ENCODE measurements at regions of chr22 and their contacts with region 1.

Region 1: GRCh38 chr22:46457524-46458488 is 79.6 kb downstream of the CELSR1 start:
- DNase-seq: no peak
- H3K4me3 ChIP-seq: no peak overlapping the region
- CTCF ChIP-seq: no peak

Region 2: GRCh38 chr22:46390652-46391301 is 67.0 kb before region 1 on chr22:
- in situ Hi-C with region 1: no loop called
- DNase-seq: no peak
- H3K4me3 ChIP-seq: no peak overlapping the region
- CTCF ChIP-seq: no peak

Region 3: DNA sequence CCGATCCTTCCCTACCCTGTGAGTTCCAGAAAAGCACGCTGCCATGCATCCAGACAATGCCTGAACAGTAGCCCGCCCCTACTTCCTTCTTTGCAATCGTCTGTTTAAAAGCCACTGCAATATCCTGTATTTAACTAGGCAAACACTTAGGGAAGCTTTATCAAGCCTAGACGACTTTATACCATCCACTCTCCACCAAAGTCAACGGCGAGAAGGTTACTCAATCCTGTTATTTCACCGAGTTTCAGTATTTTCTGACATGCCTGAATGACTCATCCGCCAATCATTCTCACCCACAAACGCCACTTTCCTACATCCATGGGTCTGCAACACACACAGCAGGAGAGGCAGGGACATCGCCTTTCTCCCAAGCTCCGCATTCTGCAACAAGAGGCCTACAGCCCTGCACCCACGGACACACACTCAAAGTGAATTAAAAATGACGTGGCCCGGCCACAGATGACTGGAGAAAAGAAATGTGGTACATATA is 70.4 kb after region 1 on chr22:
- in situ Hi-C with region 1: loop called (anchors 5 kb)
- DNase-seq: no peak
- H3K4me3 ChIP-seq: no peak overlapping the region
- CTCF ChIP-seq: no peak

Measured in astrocyte of the cerebellum (primary cell).